Heart right ventricle (tissue), 16 donors: ENCODE measurements at regions of chr7 and their contacts with region 1.

Region 1: DNA sequence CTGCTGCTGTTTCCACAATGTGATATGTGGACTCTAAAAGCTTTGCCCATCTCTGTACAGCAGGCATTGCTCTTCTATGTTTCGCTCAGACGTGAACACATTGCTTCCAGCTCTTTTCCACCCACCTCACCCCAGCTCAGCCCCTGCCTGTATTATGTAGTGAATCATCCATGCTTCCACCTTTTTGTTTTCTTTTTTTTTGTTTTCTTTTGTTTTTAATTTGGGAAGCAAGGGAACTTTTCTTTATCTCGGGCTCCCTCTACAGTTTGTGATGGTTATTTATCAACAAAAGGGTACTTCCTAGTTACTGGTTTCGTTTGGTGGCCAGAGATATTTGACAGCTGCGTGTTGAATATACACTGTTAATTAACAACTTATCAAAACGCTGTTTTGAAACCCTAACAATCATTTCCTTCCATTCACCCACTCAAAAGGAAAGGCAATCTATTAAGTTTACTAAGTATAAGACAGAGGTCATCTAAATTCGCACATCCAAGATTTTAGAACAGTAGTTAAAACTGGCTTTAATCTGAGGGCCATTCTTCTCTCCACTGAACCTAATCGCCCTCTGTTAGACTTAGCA is 127.9 kb upstream of the STK17A start:
- DNase-seq: no peak
- ATAC-seq: no peak
- H3K4me3 ChIP-seq: no peak overlapping the region
- H3K27ac ChIP-seq: no peak overlapping the region
- H3K4me1 ChIP-seq: peaks cover 0 to 5% (median 0%) of the 10 kb centered on the region in 9 donors
- H3K27me3 ChIP-seq: peaks cover 0 to 3% (median 0%) of the 10 kb centered on the region in 7 donors
- CTCF ChIP-seq: peak in 7 of 9 donors; percentile 6 to 58 (median 48)

Region 2: GRCh38 chr7:43729214-43729923 is 274.3 kb after region 1 on chr7 and contains the start of gene COA1:
- intact Hi-C with region 1: loop called in 2 of 10 experiments (anchors 10 kb)
- DNase-seq: peak; percentile 86 to 89
- ATAC-seq: peak; percentile 98 to 99 (median 99)
- H3K4me3 ChIP-seq: peak within 1 kb of the TSS; percentile 76 to 94 (median 84)
- H3K27ac ChIP-seq: peak within 1 kb of the TSS; percentile 70 to 96 (median 92)
- H3K4me1 ChIP-seq: peaks cover 0 to 40% (median 30%) of the 10 kb centered on the region in 9 donors
- H3K27me3 ChIP-seq: no peaks in the 10 kb centered on the region
- CTCF ChIP-seq: peak in 3 of 9 donors; percentile 14 to 27 (median 20)
- total RNA-seq, gene COA1: 64.5 to 83.1 (median 75.4) TPM